GM13976 (cell line): ENCODE measurements at regions of chr9 and their contacts with region 1.

Region 1: DNA sequence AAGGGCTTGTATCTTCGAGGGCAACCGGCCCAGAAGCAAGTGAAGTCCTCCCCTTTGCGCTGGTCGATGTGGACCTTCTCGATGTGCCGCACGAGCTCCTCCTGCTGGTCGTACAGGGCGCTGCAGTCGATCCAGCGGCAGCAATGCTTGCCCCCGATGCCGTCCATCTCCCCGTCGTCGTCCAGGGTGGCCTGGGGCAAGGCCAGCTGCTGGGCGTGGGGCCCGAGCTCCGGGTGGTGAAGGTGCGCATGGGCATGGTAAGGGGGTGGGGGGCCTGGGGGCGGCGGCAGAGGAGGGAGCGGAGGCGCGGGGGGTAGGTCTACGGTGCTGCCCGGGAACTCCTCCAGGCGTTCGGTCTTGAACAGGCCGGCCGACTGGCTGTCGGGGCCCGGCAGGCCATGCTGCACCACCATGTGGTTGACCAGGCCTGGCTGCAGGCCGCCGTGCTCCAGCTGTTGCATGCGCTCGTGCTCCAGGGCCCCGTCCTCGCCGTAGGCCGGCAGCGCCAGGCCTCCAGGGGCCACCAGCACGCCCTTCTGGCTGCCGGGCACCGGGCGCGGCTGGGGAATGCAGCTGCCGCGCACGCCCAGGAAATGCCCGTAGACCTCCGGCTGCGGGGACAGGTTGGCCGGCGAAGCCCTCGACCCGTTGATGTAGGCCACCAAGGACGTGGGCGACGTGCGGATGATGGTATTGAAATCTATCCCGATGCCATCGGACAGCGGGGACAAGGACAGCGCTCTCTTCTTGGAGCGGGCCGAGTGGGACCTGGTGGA is 181.8 kb downstream of the GLIS3 start:
- DNase-seq: peak; percentile 69
- CTCF ChIP-seq: peak; percentile 54

Region 2: GRCh38 chr9:3467593-3468219 is 650.3 kb before region 1 on chr9:
- in situ Hi-C with region 1: loop called (anchors 25 kb)
- DNase-seq: peak; percentile 51
- CTCF ChIP-seq: peak; percentile 98